Right ventricle myocardium inferior (tissue), 1 donor: ENCODE measurements at regions of chrX and their contacts with region 1.

Region 1: GRCh38 chrX:1391707-1392375 is at the start of gene SLC25A6:
- DNase-seq: peak; percentile 99
- ATAC-seq: peak; percentile 96
- total RNA-seq, gene SLC25A6: 145 TPM

Region 2: DNA sequence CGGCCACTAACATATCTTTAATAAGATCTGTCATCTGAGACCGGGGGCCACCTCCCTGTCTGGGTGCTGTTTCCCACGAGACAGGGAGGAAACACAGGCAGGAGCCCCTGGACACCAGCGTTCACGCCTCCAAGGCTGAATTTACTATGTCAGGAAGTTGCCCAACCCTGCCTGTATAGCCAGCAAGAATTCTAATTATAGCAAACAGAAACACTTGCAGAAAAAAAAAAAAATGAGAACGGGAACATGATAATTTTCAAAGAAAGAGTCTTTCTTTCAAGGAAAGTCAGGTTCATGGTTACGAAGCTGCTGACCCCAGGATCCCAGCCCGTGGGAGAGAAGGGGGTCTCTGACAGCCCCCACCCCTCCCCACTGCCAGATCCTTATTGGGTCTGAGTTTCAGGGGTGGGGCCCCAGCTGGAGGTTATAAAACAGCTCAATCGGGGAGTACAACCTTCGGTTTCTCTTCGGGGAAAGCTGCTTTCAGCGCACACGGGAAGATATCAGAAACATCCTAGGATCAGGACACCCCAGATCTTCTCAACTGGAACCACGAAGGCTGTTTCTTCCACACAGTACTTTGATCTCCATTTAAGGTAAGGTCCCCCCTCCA is 55.4 kb before region 1 on chrX and contains the start of gene IL3RA:
- intact Hi-C with region 1: loop called (anchors 2 kb)
- DNase-seq: peak; percentile 50
- ATAC-seq: peak; percentile 45
- total RNA-seq, gene IL3RA: 8.1 TPM

Region 3: GRCh38 chrX:1453951-1454785 is 62.3 kb after region 1 on chrX:
- intact Hi-C with region 1: loop called (anchors 1 kb)
- DNase-seq: peak; percentile 91
- ATAC-seq: peak; percentile 26

Region 4: DNA sequence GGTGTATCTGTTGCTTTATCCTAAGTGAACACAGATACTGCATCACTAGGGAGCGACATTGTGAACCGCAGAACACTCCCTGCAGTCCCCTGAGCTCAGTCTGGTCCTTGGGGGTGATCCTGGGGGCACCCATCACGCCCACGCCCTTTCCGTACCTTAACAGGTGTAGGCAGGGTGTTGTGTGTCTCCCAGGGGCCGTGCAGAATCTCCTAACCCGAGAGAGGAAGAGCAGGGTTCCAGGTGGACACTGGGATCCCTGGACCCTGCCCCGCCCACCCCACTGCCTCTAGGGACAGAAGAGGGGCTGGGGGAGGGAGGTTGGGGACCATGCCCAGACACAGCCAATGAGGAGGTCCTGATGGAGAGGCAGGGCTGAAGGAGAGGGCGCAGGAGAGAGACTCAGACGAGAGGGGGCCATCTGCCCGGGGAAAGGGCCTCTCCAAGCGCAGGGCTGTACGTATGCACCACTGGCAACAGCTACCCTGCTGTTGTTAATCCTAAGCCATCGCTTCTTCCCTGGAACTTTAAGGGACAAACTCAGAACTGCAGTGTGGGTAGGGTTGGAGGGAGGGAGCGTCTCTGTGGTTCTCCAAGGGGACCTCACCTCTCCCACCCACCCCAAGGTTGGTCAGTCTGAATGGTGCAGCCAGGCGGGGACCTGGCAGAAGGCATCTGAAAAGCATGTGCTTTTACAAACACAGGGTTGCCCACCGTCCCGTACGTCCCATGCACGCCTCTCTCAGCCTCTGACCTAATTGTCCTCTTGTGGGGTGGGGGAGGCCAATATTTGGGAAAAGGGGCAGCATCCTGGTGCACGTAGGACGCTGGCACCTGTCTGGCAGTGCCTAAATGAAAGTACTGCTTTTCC is 142.7 kb after region 1 on chrX:
- intact Hi-C with region 1: no loop called
- DNase-seq: no peak
- ATAC-seq: no peak

Region 5: GRCh38 chrX:1591102-1591900 is 199.5 kb after region 1 on chrX and contains the start of gene AKAP17A:
- intact Hi-C with region 1: loop called (anchors 2 kb)
- DNase-seq: peak; percentile 96
- ATAC-seq: peak; percentile 96
- total RNA-seq, gene AKAP17A: 13.8 TPM

Region 6: GRCh38 chrX:2608638-2609430 is 1217.0 kb after region 1 on chrX:
- intact Hi-C with region 1: loop called (anchors 5 kb)
- DNase-seq: peak; percentile 95
- ATAC-seq: peak; percentile 99

Region 7: DNA sequence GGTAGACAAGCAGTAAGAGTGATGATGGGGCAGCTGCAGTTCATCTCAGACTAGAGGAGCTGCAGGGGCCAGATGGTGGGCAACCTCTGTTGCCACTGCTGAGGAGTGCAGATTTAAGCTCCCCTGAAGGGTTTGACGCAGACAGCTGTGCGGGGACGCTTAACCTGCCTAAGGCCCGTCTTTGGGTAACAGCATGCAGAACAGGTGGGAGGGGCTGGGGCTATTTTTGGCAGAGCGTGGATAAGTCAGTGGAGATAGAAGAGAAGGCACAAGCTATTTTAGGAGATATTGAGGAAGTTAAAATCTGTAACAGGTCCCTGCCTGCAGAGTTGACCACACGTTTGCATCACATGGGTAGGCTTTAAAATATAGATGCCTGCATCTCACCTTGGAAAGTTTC is 1309.8 kb after region 1 on chrX:
- intact Hi-C with region 1: loop called (anchors 5 kb)
- DNase-seq: no peak
- ATAC-seq: peak; percentile 49